Activated CD4-positive, alpha-beta memory T cell treated with anti-CD3 and anti-CD28 coated beads, Interleukin-2, amount 10 ng/mL, durations not matched to agents 7 days and 5 days (primary cell): ENCODE measurements at regions of chr1 and their contacts with region 1.

Region 1: DNA sequence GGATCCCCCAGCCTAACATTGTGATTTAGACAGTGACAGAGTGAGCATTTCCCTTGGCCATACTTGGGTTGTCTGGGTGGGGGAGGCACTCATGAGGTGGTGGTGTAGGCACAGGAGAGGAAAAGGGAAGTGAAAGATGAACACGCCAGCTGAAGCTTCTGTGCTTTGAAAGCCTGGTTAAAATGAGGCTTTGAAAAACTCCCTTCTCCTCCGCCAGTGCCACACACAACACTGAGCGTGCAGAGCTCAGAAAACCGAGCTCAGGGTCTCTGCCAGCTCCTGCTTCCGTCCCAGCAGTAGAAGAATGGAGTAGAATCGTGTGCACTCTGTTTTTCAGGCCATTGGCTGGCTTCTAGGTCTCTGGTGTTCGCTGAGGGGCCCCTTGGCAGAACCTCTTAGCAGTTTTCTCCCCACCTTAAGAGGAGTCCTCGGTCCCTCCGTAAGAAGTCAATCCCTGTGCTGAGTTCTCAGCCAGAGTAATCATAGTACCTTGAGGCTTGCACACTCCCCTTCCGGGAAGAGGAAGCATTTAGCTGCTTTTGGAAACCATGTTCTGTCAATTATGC is 12.9 kb downstream of the PLEKHM2 start:
- DNase-seq: peak; percentile 43
- H3K4me3 Mint-ChIP-seq: peak overlapping the region; percentile 64
- H3K27ac Mint-ChIP-seq: peak overlapping the region; percentile 97
- H3K4me1 Mint-ChIP-seq: peaks cover 23% of the 10 kb centered on the region
- H3K27me3 Mint-ChIP-seq: no peaks in the 10 kb centered on the region

Region 2: GRCh38 chr1:15668089-15668754 is 28.8 kb before region 1 on chr1:
- CTCF ChIA-PET with region 1: no interaction called
- POLR2A ChIA-PET with region 1: no interaction called
- DNase-seq: no peak
- H3K4me3 Mint-ChIP-seq: no peak overlapping the region
- H3K27ac Mint-ChIP-seq: no peak overlapping the region
- H3K4me1 Mint-ChIP-seq: peaks cover 1% of the 10 kb centered on the region
- H3K27me3 Mint-ChIP-seq: no peaks in the 10 kb centered on the region

Region 3: DNA sequence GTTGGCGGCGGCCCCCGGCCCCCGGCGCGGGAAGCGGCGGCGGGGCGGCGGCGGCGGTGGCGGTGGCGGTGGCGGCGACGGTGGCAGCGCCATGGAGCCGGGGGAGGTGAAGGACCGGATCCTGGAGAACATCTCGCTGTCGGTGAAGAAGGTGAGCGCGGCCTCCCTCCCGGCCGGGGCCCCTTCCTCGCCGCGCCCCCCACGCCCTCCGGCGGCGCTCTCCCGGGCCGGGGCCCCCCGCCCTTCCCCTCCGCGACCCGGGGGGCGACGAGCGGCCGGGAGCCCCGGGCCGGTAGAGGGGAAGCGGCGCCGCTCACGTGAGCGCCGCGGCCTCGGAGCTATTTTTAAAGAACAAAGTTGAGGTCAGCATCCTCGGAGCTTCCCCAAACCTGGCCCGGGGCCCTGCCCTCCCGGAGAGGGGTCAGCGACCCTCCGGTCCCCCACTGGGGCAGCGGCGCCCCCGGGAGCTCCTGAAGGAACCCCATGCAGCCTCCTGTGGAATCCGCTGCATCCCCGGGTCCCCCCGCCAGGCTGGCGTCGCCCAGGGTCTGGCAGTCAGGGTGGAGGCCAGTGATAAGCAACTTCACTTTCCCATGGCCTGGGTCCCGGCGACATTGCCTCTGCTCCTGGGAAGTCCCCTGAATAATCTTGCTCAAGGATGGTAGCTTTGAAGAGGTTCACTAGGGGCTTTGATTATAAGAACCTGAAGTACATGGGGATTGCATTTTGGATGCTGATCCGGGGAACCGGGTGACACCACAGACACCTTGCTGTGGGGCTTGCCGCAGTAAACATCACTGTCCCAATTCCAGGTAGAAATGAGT is 12.4 kb before region 1 on chr1:
- CTCF ChIA-PET with region 1: interaction called, 4 read pairs
- POLR2A ChIA-PET with region 1: interaction called, 49 read pairs
- DNase-seq: peak; percentile 46
- H3K4me3 Mint-ChIP-seq: peak overlapping the region; percentile 86
- H3K27ac Mint-ChIP-seq: peak overlapping the region; percentile 86
- H3K4me1 Mint-ChIP-seq: peaks cover 41% of the 10 kb centered on the region
- H3K27me3 Mint-ChIP-seq: no peaks in the 10 kb centered on the region